ENCODE measurements at regions of chr16 and their contacts with region 1.

Region 1: DNA sequence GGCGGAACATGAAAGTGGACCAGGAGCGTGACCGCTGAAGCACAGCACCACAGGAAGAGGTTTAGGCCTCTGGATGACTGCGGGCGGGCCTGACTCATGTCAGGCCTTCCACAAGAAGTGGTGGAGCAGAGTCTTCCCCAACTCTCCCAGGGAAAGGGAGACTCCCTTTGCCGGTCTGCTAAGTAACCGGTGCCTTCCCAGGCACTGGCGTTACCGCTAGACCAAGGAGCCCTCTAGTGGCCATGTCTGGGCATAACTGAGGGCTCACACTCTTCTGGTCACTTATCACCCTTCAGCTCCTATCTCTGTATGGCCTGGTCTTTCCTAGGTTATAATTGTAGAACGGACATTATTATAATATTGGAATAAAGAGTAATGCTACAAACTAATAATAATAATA is 1931.9 kb downstream of the TP53TG3F start:
- DNase-seq: peak; percentile 72
- H3K4me3 Mint-ChIP-seq: no peak overlapping the region
- H3K27ac Mint-ChIP-seq: no peak overlapping the region
- H3K4me1 Mint-ChIP-seq: no peaks in the 10 kb centered on the region
- H3K27me3 Mint-ChIP-seq: no peaks in the 10 kb centered on the region
- CTCF ChIP-seq: peak; percentile 49

Region 2: GRCh38 chr16:35102780-35103403 is 288.4 kb before region 1 on chr16:
- CTCF ChIA-PET with region 1: interaction called, 6 read pairs
- POLR2A ChIA-PET with region 1: no interaction called
- intact Hi-C with region 1: loop called (anchors 2 kb)
- DNase-seq: peak; percentile 2
- H3K4me3 Mint-ChIP-seq: no peak overlapping the region
- H3K27ac Mint-ChIP-seq: no peak overlapping the region
- H3K4me1 Mint-ChIP-seq: no peaks in the 10 kb centered on the region
- H3K27me3 Mint-ChIP-seq: no peaks in the 10 kb centered on the region
- CTCF ChIP-seq: peak; percentile 54

Region 3: DNA sequence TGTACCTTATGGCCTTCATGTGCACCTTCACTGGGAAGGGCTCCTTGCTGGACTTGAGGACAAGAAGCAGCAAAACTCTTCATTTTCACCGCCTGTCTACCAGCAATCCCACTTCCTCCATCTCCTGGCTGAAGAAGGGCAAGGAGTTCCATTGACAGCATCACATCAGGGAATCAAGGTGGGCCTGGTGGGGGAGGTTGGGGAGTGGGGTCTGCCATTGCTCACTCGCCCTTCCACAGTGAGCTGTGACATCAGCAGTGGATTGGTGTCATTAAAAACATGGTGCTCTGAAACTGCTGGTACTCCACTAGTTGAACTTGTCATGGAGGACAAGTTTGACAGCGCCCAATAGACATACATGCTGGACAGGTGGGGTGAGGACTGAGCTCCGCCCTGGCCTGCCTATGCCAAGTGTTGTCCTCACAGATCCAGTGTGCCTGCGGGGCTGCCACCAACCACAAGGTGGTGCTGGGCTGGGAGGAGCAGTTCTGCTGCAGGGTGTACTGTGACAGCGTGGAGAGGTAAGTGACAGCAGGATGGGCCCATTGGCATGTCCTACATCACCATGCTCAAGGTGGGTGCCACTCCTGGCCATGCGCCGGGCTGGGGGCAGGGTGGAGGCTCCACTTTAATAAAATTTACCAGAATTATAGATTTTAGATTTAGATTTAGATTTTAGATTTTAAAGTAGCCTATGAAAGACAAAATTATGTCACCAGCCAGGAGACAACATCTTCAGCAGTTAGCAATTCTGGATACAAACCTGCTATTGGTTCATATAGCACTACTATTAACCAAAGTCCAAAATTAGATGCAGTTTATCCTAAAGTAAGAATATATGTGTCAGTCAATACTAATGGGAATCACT is 202.8 kb before region 1 on chr16:
- CTCF ChIA-PET with region 1: no interaction called
- POLR2A ChIA-PET with region 1: no interaction called
- intact Hi-C with region 1: loop called (anchors 2 kb)
- DNase-seq: peak; percentile 27
- H3K4me3 Mint-ChIP-seq: no peak overlapping the region
- H3K27ac Mint-ChIP-seq: no peak overlapping the region
- H3K4me1 Mint-ChIP-seq: no peaks in the 10 kb centered on the region
- H3K27me3 Mint-ChIP-seq: no peaks in the 10 kb centered on the region
- CTCF ChIP-seq: peak; percentile 25

Region 4: GRCh38 chr16:35405547-35405946 is 14.2 kb after region 1 on chr16:
- CTCF ChIA-PET with region 1: interaction called, 17 read pairs
- POLR2A ChIA-PET with region 1: no interaction called
- intact Hi-C with region 1: no loop called
- DNase-seq: no peak
- H3K4me3 Mint-ChIP-seq: no peak overlapping the region
- H3K27ac Mint-ChIP-seq: no peak overlapping the region
- H3K4me1 Mint-ChIP-seq: no peaks in the 10 kb centered on the region
- H3K27me3 Mint-ChIP-seq: no peaks in the 10 kb centered on the region
- CTCF ChIP-seq: no peak